Astrocyte of the cerebellum (primary cell): ENCODE measurements at regions of chr1 and their contacts with region 1.

Region 1: GRCh38 chr1:43622471-43622870 is 27.5 kb upstream of the KDM4A start:
- DNase-seq: no peak
- H3K4me3 ChIP-seq: no peak overlapping the region
- CTCF ChIP-seq: no peak

Region 2: GRCh38 chr1:43563876-43564539 is 58.5 kb before region 1 on chr1:
- in situ Hi-C with region 1: loop called (anchors 5 kb)
- DNase-seq: no peak
- H3K4me3 ChIP-seq: no peak overlapping the region
- CTCF ChIP-seq: no peak